CD4-positive, alpha-beta memory T cell (primary cell): ENCODE measurements at regions of chr1 and their contacts with region 1.

Region 1: DNA sequence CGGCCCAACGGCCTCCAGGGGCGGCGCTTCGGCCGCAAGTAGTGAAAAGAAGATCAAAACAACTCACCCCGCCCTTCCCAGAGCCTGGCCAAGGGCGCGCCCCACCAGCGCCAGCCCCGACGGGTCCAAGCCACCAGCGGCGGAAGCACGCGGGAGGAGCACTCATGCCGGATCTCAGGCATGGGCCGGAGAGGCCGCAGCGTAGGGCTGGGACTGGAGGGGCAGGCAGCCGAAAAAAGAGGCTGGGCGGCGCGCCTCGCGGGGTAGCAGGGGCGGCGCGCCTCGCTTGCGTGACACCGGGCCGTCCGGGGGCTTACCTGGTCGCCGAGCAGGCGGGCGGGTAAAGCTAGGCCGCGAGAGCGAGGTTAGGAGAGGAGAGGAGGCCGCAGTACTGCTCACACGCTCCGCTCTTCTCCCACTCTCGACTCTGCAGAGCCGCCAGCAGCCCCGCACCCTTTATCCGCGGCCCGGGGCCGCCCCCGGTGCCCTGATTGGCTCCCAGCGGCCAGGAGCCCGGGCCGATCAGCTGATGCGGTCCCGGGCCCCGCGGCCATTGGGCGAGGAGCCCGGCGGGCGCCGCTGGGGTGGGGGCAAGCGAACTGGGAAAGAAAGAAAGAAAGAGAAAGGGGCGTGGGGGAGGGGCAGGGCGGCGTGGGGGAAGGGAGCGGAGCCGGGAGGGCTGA is at the start of gene GLUL:
- DNase-seq: peak; percentile 59 to 71 (median 61)
- H3K4me3 ChIP-seq: peak within 1 kb of the TSS; percentile 60 to 83
- H3K4me3 Mint-ChIP-seq: peak within 1 kb of the TSS; percentile 91 to 98 (median 94)
- H3K27ac ChIP-seq: peak within 1 kb of the TSS; percentile 48
- H3K27ac Mint-ChIP-seq: peak within 1 kb of the TSS; percentile 74 to 93 (median 89)
- H3K4me1 ChIP-seq: peaks cover 30% of the 10 kb centered on the region
- H3K4me1 Mint-ChIP-seq: peaks cover 20 to 42% (median 30%) of the 10 kb centered on the region in 4 donors
- H3K27me3 ChIP-seq: no peaks in the 10 kb centered on the region
- H3K27me3 Mint-ChIP-seq: peaks cover 1 to 2% of the 10 kb centered on the region in 2 donors
- total RNA-seq, gene GLUL: 78.5 to 96.0 TPM

Region 2: GRCh38 chr1:181128592-181129497 is 1262.7 kb before region 1 on chr1:
- CTCF ChIA-PET with region 1: no interaction called
- POLR2A ChIA-PET with region 1: no interaction called
- intact Hi-C with region 1: no loop called
- DNase-seq: no peak
- H3K4me3 ChIP-seq: no peak overlapping the region
- H3K4me3 Mint-ChIP-seq: no peak overlapping the region
- H3K27ac ChIP-seq: no peak overlapping the region
- H3K27ac Mint-ChIP-seq: no peak overlapping the region
- H3K4me1 ChIP-seq: peaks cover 2% of the 10 kb centered on the region
- H3K4me1 Mint-ChIP-seq: peaks cover 0 to 6% (median 3%) of the 10 kb centered on the region in 4 donors
- H3K27me3 ChIP-seq: no peaks in the 10 kb centered on the region
- H3K27me3 Mint-ChIP-seq: peaks cover 0 to 2% of the 10 kb centered on the region in 2 donors

Region 3: DNA sequence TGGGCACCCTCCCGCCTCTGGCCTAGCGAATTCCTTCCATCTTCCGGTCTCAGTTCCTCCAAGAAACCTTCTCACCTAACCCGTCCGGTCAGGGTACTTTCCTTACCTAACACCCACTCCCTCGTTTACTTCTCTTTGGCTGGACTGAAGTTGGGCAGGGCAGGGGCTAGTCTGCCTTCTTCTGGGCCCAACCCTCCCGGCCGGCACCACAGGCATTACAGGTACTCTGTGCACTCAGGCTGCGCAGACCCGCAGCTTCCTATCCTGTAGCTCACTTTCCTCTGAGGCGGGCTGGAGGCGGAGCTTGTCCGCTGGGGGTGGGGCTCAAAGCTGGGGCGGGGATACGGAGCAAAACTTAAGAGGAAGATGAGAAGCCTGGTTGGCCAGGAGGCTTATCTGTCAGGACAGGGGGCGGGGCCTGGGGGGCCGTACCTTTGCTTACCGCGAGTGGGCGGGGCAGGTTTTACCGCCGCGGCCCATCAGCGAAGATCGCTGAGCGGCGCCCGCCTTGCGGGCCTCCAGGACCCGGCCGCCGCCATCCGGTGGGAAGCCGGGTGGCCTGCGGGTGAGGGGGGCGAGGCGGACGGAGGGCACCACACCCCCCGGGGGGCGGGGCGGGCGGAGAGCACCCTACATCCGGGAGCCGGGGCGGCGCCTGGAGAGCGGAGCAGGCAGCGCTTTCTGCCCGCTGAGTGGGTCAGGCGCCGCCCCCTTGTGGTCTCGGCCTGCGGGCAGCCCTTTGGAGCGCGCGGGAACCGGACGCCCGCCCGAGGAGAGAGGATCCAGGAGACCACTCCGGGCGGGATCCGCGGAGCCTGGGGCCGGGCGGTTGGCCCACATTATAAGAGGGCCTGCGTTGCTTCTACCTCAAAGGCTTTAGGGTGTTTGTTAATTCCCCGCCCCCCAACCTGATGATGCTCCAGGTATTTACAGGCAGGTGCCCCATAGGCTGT is 361.8 kb before region 1 on chr1:
- CTCF ChIA-PET with region 1: no interaction called
- POLR2A ChIA-PET with region 1: interaction called, 3 read pairs
- intact Hi-C with region 1: loop called (anchors 1 kb)
- DNase-seq: peak; percentile 98
- H3K4me3 ChIP-seq: peak overlapping the region; percentile 92 to 94
- H3K4me3 Mint-ChIP-seq: peak overlapping the region; percentile 91 to 100 (median 96)
- H3K27ac ChIP-seq: peak overlapping the region; percentile 77
- H3K27ac Mint-ChIP-seq: peak overlapping the region; percentile 84 to 100 (median 99)
- H3K4me1 ChIP-seq: peaks cover 16% of the 10 kb centered on the region
- H3K4me1 Mint-ChIP-seq: peaks cover 14 to 21% (median 16%) of the 10 kb centered on the region in 4 donors
- H3K27me3 ChIP-seq: no peaks in the 10 kb centered on the region
- H3K27me3 Mint-ChIP-seq: no peaks in the 10 kb centered on the region

Region 4: DNA sequence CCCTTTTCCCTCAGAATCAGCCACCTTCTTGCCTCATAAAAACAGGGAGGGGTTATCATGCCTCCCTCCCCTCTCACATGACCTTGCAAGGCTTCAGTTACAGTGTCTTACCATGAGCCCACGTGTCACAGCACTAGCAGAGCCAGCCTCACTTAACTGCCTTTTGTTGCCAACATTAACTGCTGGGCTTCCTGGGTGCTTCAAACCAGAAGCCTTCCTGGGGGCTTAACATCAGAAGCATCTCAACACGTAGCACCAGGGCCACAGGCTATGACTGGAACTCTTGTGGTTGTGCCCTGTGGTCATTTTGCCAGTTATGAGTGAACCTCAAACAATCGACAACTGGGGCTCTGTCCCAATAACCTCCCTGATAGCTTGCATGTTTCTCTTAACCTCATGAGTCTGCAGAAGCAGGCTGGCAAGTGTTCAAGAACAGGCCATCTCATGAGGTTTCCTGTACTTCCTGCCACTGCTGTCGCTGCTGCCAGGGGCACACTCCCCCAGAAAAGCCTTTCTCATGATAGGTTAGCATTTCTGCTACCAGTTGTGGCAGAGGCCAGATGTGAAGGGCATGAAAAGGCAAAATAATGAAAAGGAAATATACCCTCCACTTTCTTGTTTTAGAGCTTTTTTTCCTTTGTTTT is 132.2 kb before region 1 on chr1:
- CTCF ChIA-PET with region 1: interaction called, 3 read pairs
- POLR2A ChIA-PET with region 1: interaction called, 3 read pairs
- intact Hi-C with region 1: loop called (anchors 2 kb)
- DNase-seq: peak; percentile 70 to 77 (median 76)
- H3K4me3 ChIP-seq: no peak overlapping the region
- H3K4me3 Mint-ChIP-seq: peak overlapping the region; percentile 64 to 88 (median 76)
- H3K27ac ChIP-seq: peak overlapping the region; percentile 48
- H3K27ac Mint-ChIP-seq: peak overlapping the region; percentile 79 to 96 (median 92)
- H3K4me1 ChIP-seq: peaks cover 43% of the 10 kb centered on the region
- H3K4me1 Mint-ChIP-seq: peaks cover 27 to 44% (median 34%) of the 10 kb centered on the region in 4 donors
- H3K27me3 ChIP-seq: no peaks in the 10 kb centered on the region
- H3K27me3 Mint-ChIP-seq: no peaks in the 10 kb centered on the region

Region 5: GRCh38 chr1:182674346-182675246 is 283.1 kb after region 1 on chr1:
- CTCF ChIA-PET with region 1: no interaction called
- POLR2A ChIA-PET with region 1: no interaction called
- intact Hi-C with region 1: no loop called
- DNase-seq: no peak
- H3K4me3 ChIP-seq: no peak overlapping the region
- H3K4me3 Mint-ChIP-seq: no peak overlapping the region
- H3K27ac ChIP-seq: no peak overlapping the region
- H3K27ac Mint-ChIP-seq: no peak overlapping the region
- H3K4me1 ChIP-seq: no peaks in the 10 kb centered on the region
- H3K4me1 Mint-ChIP-seq: no peaks in the 10 kb centered on the region
- H3K27me3 ChIP-seq: no peaks in the 10 kb centered on the region
- H3K27me3 Mint-ChIP-seq: peaks cover 5 to 6% of the 10 kb centered on the region in 2 donors

Region 6: GRCh38 chr1:182789138-182790076 is 397.9 kb after region 1 on chr1 and contains the start of gene NPL:
- CTCF ChIA-PET with region 1: no interaction called
- POLR2A ChIA-PET with region 1: no interaction called
- intact Hi-C with region 1: loop called (anchors 10 kb)
- DNase-seq: peak; percentile 86 to 89 (median 88)
- H3K4me3 ChIP-seq: peak within 1 kb of the TSS; percentile 69 to 88
- H3K4me3 Mint-ChIP-seq: peak within 1 kb of the TSS; percentile 89 to 94 (median 92)
- H3K27ac ChIP-seq: peak within 1 kb of the TSS; percentile 67
- H3K27ac Mint-ChIP-seq: peak within 1 kb of the TSS; percentile 78 to 92 (median 90)
- H3K4me1 ChIP-seq: peaks cover 13% of the 10 kb centered on the region
- H3K4me1 Mint-ChIP-seq: peaks cover 10 to 16% (median 11%) of the 10 kb centered on the region in 4 donors
- H3K27me3 ChIP-seq: no peaks in the 10 kb centered on the region
- H3K27me3 Mint-ChIP-seq: no peaks in the 10 kb centered on the region
- total RNA-seq, gene NPL: 9.6 TPM

Region 7: GRCh38 chr1:183635606-183636333 is 1244.3 kb after region 1 on chr1 and contains the start of gene ARPC5:
- CTCF ChIA-PET with region 1: no interaction called
- POLR2A ChIA-PET with region 1: no interaction called
- intact Hi-C with region 1: loop called (anchors 5 kb)
- DNase-seq: peak; percentile 94 to 95 (median 94)
- H3K4me3 ChIP-seq: peak within 1 kb of the TSS; percentile 72 to 88
- H3K4me3 Mint-ChIP-seq: peak within 1 kb of the TSS; percentile 100
- H3K27ac ChIP-seq: peak within 1 kb of the TSS; percentile 81
- H3K27ac Mint-ChIP-seq: peak within 1 kb of the TSS; percentile 92 to 100 (median 99)
- H3K4me1 ChIP-seq: peaks cover 44% of the 10 kb centered on the region
- H3K4me1 Mint-ChIP-seq: peaks cover 26 to 54% (median 36%) of the 10 kb centered on the region in 4 donors
- H3K27me3 ChIP-seq: no peaks in the 10 kb centered on the region
- H3K27me3 Mint-ChIP-seq: no peaks in the 10 kb centered on the region
- total RNA-seq, gene ARPC5: 106 to 107 TPM